ENCODE measurements at regions of chr17 and their contacts with region 1.

Region 1: GRCh38 chr17:58176200-58176599 is 9.4 kb downstream of the OR4D2 start:
- DNase-seq: peak; percentile 25
- ATAC-seq: 0 out of 2 replicates have a peak, but pooled peaks have one; percentile 59
- H3K4me3 ChIP-seq: no peak overlapping the region
- H3K27ac ChIP-seq: no peak overlapping the region
- H3K4me1 ChIP-seq: no peaks in the 10 kb centered on the region
- H3K27me3 ChIP-seq: no peaks in the 10 kb centered on the region; the same call in 1 of the 2 replicates
- CTCF ChIP-seq: no peak
- POLR2A ChIP-seq: no peak
- RAD21 ChIP-seq: no peak

Region 2: DNA sequence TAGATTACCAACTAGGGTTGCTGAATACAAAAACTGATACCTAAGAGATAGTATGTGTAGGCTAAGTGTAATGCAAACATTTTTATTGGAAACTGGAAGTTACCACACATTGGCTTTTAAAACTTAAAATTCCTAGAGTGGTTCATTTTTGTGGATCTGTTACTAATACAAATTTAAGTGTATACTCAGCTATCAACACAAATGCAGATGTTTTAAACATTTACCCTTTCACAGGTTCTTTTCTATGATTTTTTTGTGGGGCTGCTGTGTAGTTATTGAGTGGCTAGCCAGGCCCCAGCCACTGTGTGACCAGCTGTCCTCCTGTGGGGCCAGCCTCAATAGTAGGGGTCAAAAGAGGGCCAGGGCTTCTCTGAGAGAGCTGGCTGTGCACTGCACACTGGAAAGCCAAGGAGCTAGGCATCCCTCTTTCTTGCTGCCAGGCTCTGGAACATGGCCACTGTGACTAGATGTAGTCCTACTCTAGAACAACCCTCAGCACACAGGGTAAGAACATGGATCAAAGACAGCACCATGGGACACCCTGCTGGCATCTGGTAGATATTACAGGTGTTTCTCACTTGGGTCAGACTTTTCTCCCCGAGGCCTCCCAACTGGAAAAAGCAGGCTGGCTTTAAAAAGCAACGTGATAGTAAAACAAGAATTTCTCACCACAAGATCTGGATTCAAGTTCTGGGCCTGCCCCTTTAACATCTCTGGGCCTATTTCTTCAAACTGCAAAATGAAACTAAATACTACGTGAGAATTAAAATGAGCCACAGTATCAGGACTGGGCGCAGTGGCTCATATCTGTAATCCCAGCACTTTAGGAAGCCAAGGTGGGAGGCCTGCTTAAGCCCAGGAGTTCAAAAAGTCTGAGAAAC is 180.9 kb before region 1 on chr17:
- CTCF ChIA-PET with region 1: no interaction called
- POLR2A ChIA-PET with region 1: no interaction called
- dilution Hi-C with region 1: no loop called
- in situ Hi-C with region 1: no loop called
- intact Hi-C with region 1: no loop called
- DNase-seq: peak; percentile 81
- ATAC-seq: peak; percentile 91
- H3K4me3 ChIP-seq: no peak overlapping the region
- H3K27ac ChIP-seq: no peak overlapping the region
- H3K4me1 ChIP-seq: peaks cover 2% of the 10 kb centered on the region; the same call in 1 of the 2 replicates
- H3K27me3 ChIP-seq: no peaks in the 10 kb centered on the region
- CTCF ChIP-seq: peak; percentile 73
- POLR2A ChIP-seq: no peak
- RAD21 ChIP-seq: peak; percentile 90

Region 3: DNA sequence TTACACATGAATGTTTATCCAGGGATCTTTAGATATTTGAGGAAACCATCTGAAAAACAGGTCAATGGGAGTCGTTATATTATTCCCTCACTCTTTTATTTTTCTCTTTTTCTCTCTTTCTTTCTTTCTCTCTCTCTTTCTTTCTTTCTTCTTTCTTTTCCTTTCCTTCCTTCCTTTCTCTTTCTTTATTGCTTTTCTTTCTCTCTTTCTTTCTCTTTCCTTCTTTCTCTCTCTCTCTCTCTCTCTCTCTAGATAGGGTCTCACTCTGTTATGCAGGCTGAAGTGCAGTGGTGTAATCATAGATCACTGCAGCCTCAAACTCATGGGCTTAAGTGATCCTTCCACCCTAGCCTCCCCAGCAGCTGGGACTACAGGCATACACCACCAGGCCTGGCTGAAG is 48.3 kb before region 1 on chr17:
- CTCF ChIA-PET with region 1: no interaction called
- POLR2A ChIA-PET with region 1: no interaction called
- dilution Hi-C with region 1: no loop called
- in situ Hi-C with region 1: no loop called
- intact Hi-C with region 1: loop called (anchors 5 kb)
- DNase-seq: no peak
- ATAC-seq: no peak
- H3K4me3 ChIP-seq: no peak overlapping the region
- H3K27ac ChIP-seq: no peak overlapping the region
- H3K4me1 ChIP-seq: no peaks in the 10 kb centered on the region
- H3K27me3 ChIP-seq: no peaks in the 10 kb centered on the region; the same call in 1 of the 2 replicates
- CTCF ChIP-seq: no peak
- POLR2A ChIP-seq: no peak
- RAD21 ChIP-seq: no peak